Naive thymus-derived CD4-positive, alpha-beta T cell (primary cell): ENCODE measurements at regions of chr10 and their contacts with region 1.

Region 1: DNA sequence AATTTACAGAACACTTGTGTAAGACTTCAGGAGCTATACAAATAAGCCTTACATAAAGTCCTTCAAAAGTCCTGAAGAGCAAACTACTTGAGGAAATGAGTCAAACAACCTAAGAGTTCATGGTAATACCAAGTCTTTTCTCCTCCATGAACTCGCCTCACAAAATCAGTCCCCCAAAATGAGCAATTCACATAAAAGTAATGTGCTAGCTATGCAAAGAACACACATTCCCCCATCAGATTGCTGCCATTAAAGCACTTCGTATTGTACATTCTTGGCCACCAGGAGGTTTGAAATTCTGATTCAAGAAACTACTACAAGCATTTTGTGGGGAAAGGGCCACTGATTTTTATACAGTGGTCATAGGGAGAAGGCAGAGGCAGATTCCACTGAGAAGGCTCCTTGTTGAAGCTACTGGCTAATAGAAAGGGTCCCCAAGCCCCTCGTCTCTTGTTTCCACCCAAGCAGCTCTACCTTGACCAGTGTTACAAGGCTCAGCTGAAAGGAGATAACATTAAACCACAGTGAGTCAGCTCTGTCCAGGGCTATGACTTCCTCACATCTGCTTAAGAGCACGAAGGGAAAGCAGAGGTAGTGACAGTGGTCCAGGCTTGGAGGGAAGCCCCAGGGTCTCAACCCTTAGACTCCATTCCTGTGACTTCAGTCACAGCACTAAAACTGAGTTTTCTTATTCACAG is 115.2 kb upstream of the CDK1 start:
- DNase-seq: no peak
- ATAC-seq: peak; percentile 69
- H3K4me3 ChIP-seq: no peak overlapping the region
- H3K4me3 Mint-ChIP-seq: peak overlapping the region in 3 of 10 donors; percentile 32 to 53 (median 46)
- H3K27ac ChIP-seq: no peak overlapping the region
- H3K27ac Mint-ChIP-seq: peak overlapping the region in 3 of 9 donors; percentile 3 to 46 (median 42)
- H3K4me1 ChIP-seq: peaks cover 0 to 16% of the 10 kb centered on the region in 2 donors
- H3K4me1 Mint-ChIP-seq: peaks cover 23 to 68% (median 48%) of the 10 kb centered on the region in 7 donors
- H3K27me3 ChIP-seq: no peaks in the 10 kb centered on the region
- H3K27me3 Mint-ChIP-seq: no peaks in the 10 kb centered on the region

Region 2: GRCh38 chr10:60717852-60718251 is 54.8 kb after region 1 on chr10:
- CTCF ChIA-PET with region 1: no interaction called
- POLR2A ChIA-PET with region 1: no interaction called
- intact Hi-C with region 1: loop called in 1 of 2 experiments (anchors 5 kb)
- DNase-seq: no peak
- ATAC-seq: no peak
- H3K4me3 ChIP-seq: no peak overlapping the region
- H3K4me3 Mint-ChIP-seq: no peak overlapping the region
- H3K27ac ChIP-seq: no peak overlapping the region
- H3K27ac Mint-ChIP-seq: no peak overlapping the region
- H3K4me1 ChIP-seq: peaks cover 12 to 13% of the 10 kb centered on the region in 2 donors
- H3K4me1 Mint-ChIP-seq: peaks cover 26 to 90% (median 68%) of the 10 kb centered on the region in 7 donors
- H3K27me3 ChIP-seq: no peaks in the 10 kb centered on the region
- H3K27me3 Mint-ChIP-seq: no peaks in the 10 kb centered on the region

Region 3: DNA sequence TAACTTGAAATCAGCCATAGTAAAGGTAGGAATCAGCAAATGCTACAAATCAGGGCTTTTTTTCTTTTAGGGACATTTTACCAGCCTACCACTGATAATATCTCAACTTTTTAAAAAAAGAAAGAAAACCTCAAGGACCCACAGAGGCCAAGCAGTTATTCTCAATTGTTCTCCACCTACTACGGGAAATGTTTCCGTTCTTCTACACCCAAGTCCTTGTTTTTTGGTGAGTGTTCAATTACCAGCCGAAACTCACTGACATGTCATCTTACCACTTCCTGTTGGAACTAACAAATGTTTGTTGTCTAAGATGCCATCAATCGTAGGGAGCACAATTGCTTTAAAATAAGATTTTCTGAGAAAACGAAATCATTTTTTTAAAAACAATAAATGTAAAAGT is 65.0 kb after region 1 on chr10:
- CTCF ChIA-PET with region 1: no interaction called
- POLR2A ChIA-PET with region 1: no interaction called
- intact Hi-C with region 1: loop called in 1 of 2 experiments (anchors 2 kb)
- DNase-seq: peak in 7 of 9 donors; percentile 51 to 85 (median 78)
- ATAC-seq: peak; percentile 73
- H3K4me3 ChIP-seq: peak overlapping the region; percentile 57
- H3K4me3 Mint-ChIP-seq: peak overlapping the region; percentile 74 to 94 (median 83)
- H3K27ac ChIP-seq: peak overlapping the region; percentile 89
- H3K27ac Mint-ChIP-seq: peak overlapping the region; percentile 84 to 98 (median 94)
- H3K4me1 ChIP-seq: peaks cover 28 to 64% of the 10 kb centered on the region in 2 donors
- H3K4me1 Mint-ChIP-seq: peaks cover 35 to 86% (median 77%) of the 10 kb centered on the region in 7 donors
- H3K27me3 ChIP-seq: no peaks in the 10 kb centered on the region
- H3K27me3 Mint-ChIP-seq: peaks cover 0 to 7% (median 0%) of the 10 kb centered on the region in 5 donors